ENCODE measurements at regions of chr2 and their contacts with region 1.

Region 1: GRCh38 chr2:177212106-177212890 is at the start of gene HNRNPA3:
- DNase-seq: peak; percentile 100
- ATAC-seq: peak; percentile 90
- H3K4me3 Mint-ChIP-seq: peak within 1 kb of the TSS; percentile 86
- H3K27ac Mint-ChIP-seq: peak within 1 kb of the TSS; percentile 99
- H3K4me1 Mint-ChIP-seq: peaks cover 42% of the 10 kb centered on the region
- H3K27me3 Mint-ChIP-seq: no peaks in the 10 kb centered on the region
- total RNA-seq, gene HNRNPA3: 200 to 290 TPM

Region 2: DNA sequence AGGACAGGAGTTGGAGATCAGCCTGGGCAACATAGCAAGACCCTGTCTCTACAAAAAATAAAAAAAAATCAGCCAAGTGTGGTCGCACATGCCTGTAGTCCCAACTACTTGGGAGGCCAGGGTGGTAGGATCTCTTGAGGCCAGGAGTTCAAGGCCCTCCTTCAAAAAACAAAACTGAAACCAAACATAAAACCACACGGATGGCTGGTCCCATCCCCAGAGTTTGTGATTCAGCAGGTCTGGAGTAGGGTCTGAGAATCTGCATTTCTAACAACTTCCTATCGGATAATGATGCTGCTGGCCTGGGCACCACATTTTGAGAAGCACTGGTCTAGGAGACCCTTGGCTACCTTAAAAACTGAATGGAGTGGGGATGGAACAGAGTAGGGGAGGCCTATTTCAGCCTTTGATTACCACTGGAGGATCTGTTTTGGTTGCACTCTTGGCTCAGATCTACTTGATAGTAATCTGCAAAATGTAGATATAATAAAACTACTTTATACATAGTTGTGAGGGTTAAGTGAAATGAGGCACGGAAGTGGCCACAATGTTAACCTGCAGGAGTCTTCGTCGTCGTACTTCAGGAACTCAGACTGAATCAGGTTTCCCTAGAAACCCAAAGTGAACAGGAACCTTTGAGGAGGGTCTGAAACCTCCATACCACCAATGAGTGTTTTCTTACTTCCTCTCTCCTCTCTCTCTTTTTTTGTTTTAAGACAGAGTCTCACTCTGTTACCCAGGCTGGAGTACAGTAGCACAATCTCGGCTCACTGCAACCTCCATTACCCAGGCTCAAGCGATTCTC is 77.7 kb after region 1 on chr2:
- CTCF ChIA-PET with region 1: no interaction called
- POLR2A ChIA-PET with region 1: interaction called, 3 read pairs
- intact Hi-C with region 1: loop called in 1 of 2 experiments (anchors 2 kb)
- DNase-seq: peak; percentile 30
- ATAC-seq: peak; percentile 73
- H3K4me3 Mint-ChIP-seq: peak overlapping the region; percentile 31
- H3K27ac Mint-ChIP-seq: peak overlapping the region; percentile 89
- H3K4me1 Mint-ChIP-seq: peaks cover 37% of the 10 kb centered on the region
- H3K27me3 Mint-ChIP-seq: no peaks in the 10 kb centered on the region

Region 3: GRCh38 chr2:177413703-177414102 is 201.4 kb after region 1 on chr2:
- CTCF ChIA-PET with region 1: no interaction called
- POLR2A ChIA-PET with region 1: no interaction called
- intact Hi-C with region 1: no loop called
- DNase-seq: no peak
- ATAC-seq: peak; percentile 64
- H3K4me3 Mint-ChIP-seq: no peak overlapping the region
- H3K27ac Mint-ChIP-seq: peak overlapping the region; percentile 42
- H3K4me1 Mint-ChIP-seq: peaks cover 38% of the 10 kb centered on the region
- H3K27me3 Mint-ChIP-seq: no peaks in the 10 kb centered on the region

Region 4: GRCh38 chr2:177552422-177553175 is 340.3 kb after region 1 on chr2:
- CTCF ChIA-PET with region 1: no interaction called
- POLR2A ChIA-PET with region 1: no interaction called
- intact Hi-C with region 1: loop called (anchors 1 kb)
- DNase-seq: peak; percentile 92
- ATAC-seq: peak; percentile 96
- H3K4me3 Mint-ChIP-seq: peak overlapping the region; percentile 90
- H3K27ac Mint-ChIP-seq: peak overlapping the region; percentile 99
- H3K4me1 Mint-ChIP-seq: peaks cover 6% of the 10 kb centered on the region
- H3K27me3 Mint-ChIP-seq: no peaks in the 10 kb centered on the region